Panc1 (cell line): ENCODE measurements at regions of chr18 and their contacts with region 1.

Region 1: DNA sequence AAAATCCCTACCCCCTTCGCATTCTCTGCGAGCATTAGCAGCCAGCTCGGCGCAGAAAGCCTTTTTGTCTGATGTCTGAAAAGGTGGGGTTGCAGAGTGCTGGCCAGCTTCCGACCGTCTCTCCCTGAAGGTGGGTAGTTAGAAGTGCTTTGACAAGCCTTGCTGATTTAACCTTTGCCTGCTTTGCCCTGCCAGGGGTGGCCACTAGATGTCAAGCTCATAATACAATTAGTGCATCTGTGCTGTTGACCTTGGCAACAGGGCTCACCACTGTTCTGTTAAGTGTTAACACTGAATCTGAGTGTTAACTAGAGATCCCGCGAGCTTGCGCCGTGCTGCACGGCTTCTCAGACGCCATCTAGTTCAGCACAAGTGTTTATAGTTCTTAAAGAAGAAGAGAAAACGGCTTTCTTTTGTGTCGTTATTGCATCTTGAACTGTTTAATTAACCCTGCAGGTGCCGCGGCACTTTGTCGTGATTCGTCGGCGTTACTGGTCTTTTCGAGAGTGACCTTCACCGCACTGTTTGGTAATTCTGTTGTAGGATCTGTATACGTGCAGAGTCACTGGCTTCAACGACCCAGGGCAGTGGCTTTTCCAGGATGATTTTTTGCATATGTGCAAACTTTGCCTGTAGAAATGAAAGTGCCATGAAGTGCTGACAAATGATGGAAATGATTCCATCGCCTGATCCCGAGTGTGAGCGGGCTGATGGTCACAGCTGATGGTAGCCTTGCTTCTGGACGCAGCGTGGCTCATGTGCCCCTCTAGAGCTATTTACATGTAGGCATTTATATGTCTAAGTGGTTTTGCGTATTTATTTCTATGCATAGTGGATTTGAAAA is 5.5 kb downstream of the SALL3 start:
- DNase-seq: peak; percentile 50
- ATAC-seq: peak; percentile 91
- H3K4me3 ChIP-seq: peak overlapping the region in 1 of 2 experiments; percentile 2; a peak in 1 of 4 replicates
- H3K27ac ChIP-seq: no peak overlapping the region
- H3K4me1 ChIP-seq: peaks cover 12% of the 10 kb centered on the region
- H3K27me3 ChIP-seq: peaks cover 37% of the 10 kb centered on the region
- CTCF ChIP-seq: peak; percentile 75

Region 2: DNA sequence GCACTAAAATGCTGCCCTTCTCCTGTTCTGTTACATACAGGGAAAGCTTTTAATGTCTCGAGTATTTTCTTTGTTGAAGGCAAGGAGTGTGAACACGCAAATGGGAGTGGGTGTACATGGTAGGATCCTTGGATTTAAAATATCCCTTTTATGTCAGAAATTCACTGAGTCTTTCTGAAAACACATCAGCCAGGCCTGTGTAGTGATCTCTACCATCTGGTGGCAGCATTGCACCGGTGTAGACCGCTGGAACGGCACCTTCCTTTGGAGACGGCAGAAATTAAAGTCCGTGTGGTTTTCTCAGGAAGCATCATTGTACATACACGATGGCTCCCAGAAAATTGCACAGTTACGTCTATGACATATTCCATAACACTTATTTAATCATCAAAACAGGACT is 1219.7 kb before region 1 on chr18:
- CTCF ChIA-PET with region 1: no interaction called
- POLR2A ChIA-PET with region 1: no interaction called
- in situ Hi-C with region 1: no loop called
- intact Hi-C with region 1: loop called (anchors 2 kb)
- DNase-seq: peak; percentile 33
- ATAC-seq: peak; percentile 98
- H3K4me3 ChIP-seq: no peak overlapping the region
- H3K27ac ChIP-seq: no peak overlapping the region
- H3K4me1 ChIP-seq: no peaks in the 10 kb centered on the region
- H3K27me3 ChIP-seq: peaks cover 25% of the 10 kb centered on the region
- CTCF ChIP-seq: peak; percentile 89

Region 3: GRCh38 chr18:77911971-77912605 is 1073.1 kb before region 1 on chr18:
- CTCF ChIA-PET with region 1: no interaction called
- POLR2A ChIA-PET with region 1: no interaction called
- in situ Hi-C with region 1: no loop called
- intact Hi-C with region 1: loop called (anchors 10 kb)
- DNase-seq: no peak
- ATAC-seq: no peak
- H3K4me3 ChIP-seq: no peak overlapping the region
- H3K27ac ChIP-seq: no peak overlapping the region
- H3K4me1 ChIP-seq: no peaks in the 10 kb centered on the region
- H3K27me3 ChIP-seq: peaks cover 17% of the 10 kb centered on the region
- CTCF ChIP-seq: no peak

Region 4: GRCh38 chr18:78073275-78073674 is 911.9 kb before region 1 on chr18:
- CTCF ChIA-PET with region 1: no interaction called
- POLR2A ChIA-PET with region 1: no interaction called
- in situ Hi-C with region 1: no loop called
- intact Hi-C with region 1: loop called (anchors 5 kb)
- DNase-seq: no peak
- ATAC-seq: peak; percentile 58; the same call in 1 of the 2 replicates
- H3K4me3 ChIP-seq: no peak overlapping the region
- H3K27ac ChIP-seq: no peak overlapping the region
- H3K4me1 ChIP-seq: no peaks in the 10 kb centered on the region
- H3K27me3 ChIP-seq: peaks cover 23% of the 10 kb centered on the region
- CTCF ChIP-seq: peak; percentile 52; the same call in 1 of the 2 replicates

Region 5: GRCh38 chr18:78659748-78660147 is 325.4 kb before region 1 on chr18:
- CTCF ChIA-PET with region 1: no interaction called
- POLR2A ChIA-PET with region 1: no interaction called
- in situ Hi-C with region 1: no loop called
- intact Hi-C with region 1: loop called (anchors 10 kb)
- DNase-seq: no peak
- ATAC-seq: peak; percentile 72
- H3K4me3 ChIP-seq: no peak overlapping the region
- H3K27ac ChIP-seq: no peak overlapping the region
- H3K4me1 ChIP-seq: no peaks in the 10 kb centered on the region
- H3K27me3 ChIP-seq: peaks cover 3% of the 10 kb centered on the region; the same call in 1 of the 2 replicates
- CTCF ChIP-seq: no peak

Region 6: GRCh38 chr18:78699516-78699915 is 285.6 kb before region 1 on chr18:
- CTCF ChIA-PET with region 1: no interaction called
- POLR2A ChIA-PET with region 1: no interaction called
- in situ Hi-C with region 1: no loop called
- intact Hi-C with region 1: no loop called
- DNase-seq: no peak
- ATAC-seq: no peak
- H3K4me3 ChIP-seq: no peak overlapping the region
- H3K27ac ChIP-seq: no peak overlapping the region
- H3K4me1 ChIP-seq: no peaks in the 10 kb centered on the region
- H3K27me3 ChIP-seq: peaks cover 22% of the 10 kb centered on the region
- CTCF ChIP-seq: no peak

Region 7: GRCh38 chr18:78875268-78875997 is 109.7 kb before region 1 on chr18:
- CTCF ChIA-PET with region 1: interaction called, 7 read pairs
- POLR2A ChIA-PET with region 1: no interaction called
- in situ Hi-C with region 1: no loop called
- intact Hi-C with region 1: loop called (anchors 5 kb)
- DNase-seq: peak; percentile 22
- ATAC-seq: peak; percentile 77
- H3K4me3 ChIP-seq: no peak overlapping the region
- H3K27ac ChIP-seq: no peak overlapping the region
- H3K4me1 ChIP-seq: no peaks in the 10 kb centered on the region
- H3K27me3 ChIP-seq: peaks cover 28% of the 10 kb centered on the region
- CTCF ChIP-seq: peak; percentile 92

Region 8: DNA sequence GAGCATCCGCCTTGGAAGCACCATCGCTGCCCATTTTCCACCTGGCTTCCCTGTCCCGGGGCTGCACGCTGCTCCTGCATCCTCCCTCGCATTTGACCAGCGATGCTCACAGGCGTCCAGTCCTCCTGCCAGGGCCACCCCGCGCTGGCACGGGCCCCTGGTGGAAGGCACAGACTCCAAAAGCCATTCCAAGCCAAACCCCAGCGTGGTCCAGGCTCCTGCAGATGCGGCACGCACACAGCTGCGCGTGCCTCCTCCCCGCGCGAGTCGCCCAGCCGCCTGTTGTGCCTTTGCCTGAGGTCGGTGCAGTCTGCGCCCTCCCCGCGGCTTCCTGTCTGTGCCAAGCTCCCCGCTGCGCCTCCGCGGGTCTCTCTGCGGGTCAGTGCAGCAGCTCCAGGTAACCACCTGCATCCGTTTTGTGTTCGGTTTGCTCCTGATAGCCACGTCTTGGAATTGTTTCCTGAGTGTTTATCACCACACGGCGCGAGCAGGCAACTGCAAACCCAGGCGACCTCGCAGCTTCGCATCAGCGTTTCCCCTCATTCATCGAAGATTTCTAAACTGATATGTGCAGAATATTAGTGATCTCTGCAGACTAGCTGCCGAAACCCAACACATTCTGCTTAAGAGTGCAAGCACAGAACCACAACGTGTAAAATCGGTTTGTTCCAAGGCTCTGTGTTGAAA is 70.8 kb before region 1 on chr18:
- CTCF ChIA-PET with region 1: no interaction called
- POLR2A ChIA-PET with region 1: no interaction called
- in situ Hi-C with region 1: no loop called
- intact Hi-C with region 1: no loop called
- DNase-seq: no peak
- ATAC-seq: no peak
- H3K4me3 ChIP-seq: no peak overlapping the region
- H3K27ac ChIP-seq: no peak overlapping the region
- H3K4me1 ChIP-seq: no peaks in the 10 kb centered on the region
- H3K27me3 ChIP-seq: peaks cover 2% of the 10 kb centered on the region; the same call in 1 of the 2 replicates
- CTCF ChIP-seq: no peak

Region 9: DNA sequence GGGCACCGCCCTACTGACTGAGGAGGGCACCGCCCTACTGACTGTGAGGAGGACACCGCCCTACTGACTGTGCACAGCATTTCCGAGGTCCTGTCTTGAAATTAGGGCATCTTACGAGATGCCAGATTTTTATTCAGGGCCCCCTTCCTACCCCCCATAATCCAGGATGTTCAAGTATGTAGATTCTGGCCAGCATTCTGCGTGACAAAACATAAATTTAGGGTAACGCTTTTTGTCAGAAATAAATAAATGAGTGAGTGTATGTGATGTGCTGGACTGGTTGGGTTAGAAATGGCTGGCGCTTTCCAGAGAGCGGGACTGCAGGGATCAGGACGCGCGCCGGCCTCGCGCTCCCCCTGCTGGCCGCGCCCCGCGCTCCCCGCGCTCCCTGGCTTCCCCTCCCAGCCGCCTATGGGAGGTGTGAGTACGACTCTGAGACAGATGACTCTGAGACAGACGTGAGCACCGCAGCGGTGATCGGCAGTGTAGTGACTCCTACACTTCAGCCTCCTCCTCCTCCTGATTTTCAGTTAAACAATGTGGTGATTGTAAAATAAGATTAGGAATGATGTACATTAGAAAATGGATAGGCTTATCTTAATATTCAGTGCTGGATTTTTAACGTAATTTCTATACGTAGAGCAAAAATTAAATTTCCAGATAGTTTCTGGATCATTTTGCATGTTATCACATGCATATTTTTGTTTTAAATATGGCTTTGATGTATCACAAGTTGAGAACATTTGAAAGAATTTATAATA is 261.4 kb after region 1 on chr18:
- CTCF ChIA-PET with region 1: no interaction called
- POLR2A ChIA-PET with region 1: no interaction called
- in situ Hi-C with region 1: no loop called
- intact Hi-C with region 1: loop called (anchors 5 kb)
- DNase-seq: peak; percentile 95
- ATAC-seq: peak; percentile 99
- H3K4me3 ChIP-seq: peak overlapping the region; percentile 58 to 64
- H3K27ac ChIP-seq: peak overlapping the region; percentile 96
- H3K4me1 ChIP-seq: peaks cover 16% of the 10 kb centered on the region
- H3K27me3 ChIP-seq: no peaks in the 10 kb centered on the region
- CTCF ChIP-seq: peak; percentile 100